Vagina (tissue), 2 donors: ENCODE measurements at regions of chr12 and their contacts with region 1.

Region 1: GRCh38 chr12:124321040-124321481 is 26.2 kb downstream of the RFLNA start:
- DNase-seq: no peak
- H3K4me3 ChIP-seq: no peak overlapping the region
- H3K27ac ChIP-seq: no peak overlapping the region
- H3K4me1 ChIP-seq: no peaks in the 10 kb centered on the region
- H3K27me3 ChIP-seq: no peaks in the 10 kb centered on the region
- CTCF ChIP-seq: peak; percentile 72 to 89 (median 73)
- POLR2A ChIP-seq: no peak

Region 2: DNA sequence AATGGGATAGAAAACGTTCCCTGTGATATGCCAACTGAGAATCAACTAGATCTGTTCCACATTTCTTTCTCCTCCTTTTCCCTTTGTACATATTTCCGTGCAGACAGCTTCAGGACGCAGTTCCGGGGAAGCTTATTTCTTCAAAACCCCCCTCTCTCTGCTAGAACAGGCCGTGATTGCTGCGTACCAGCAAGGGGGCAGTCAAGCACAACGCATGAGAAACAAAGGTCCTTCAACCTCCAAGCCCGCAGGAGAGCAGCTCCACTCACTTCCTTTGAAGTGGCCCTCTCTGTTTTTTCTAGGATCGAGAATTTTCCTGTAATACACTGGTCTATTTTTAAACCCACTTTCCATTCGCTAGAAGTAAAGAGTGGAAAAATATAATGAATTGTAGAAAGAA is 267.2 kb before region 1 on chr12:
- intact Hi-C with region 1: loop called (anchors 5 kb)
- DNase-seq: no peak
- H3K4me3 ChIP-seq: no peak overlapping the region
- H3K27ac ChIP-seq: no peak overlapping the region
- H3K4me1 ChIP-seq: no peaks in the 10 kb centered on the region
- H3K27me3 ChIP-seq: no peaks in the 10 kb centered on the region
- CTCF ChIP-seq: peak; percentile 34 to 48 (median 41)
- POLR2A ChIP-seq: no peak

Region 3: GRCh38 chr12:124174451-124175348 is 146.4 kb before region 1 on chr12:
- intact Hi-C with region 1: no loop called
- DNase-seq: no peak
- H3K4me3 ChIP-seq: no peak overlapping the region
- H3K27ac ChIP-seq: no peak overlapping the region
- H3K4me1 ChIP-seq: no peaks in the 10 kb centered on the region
- H3K27me3 ChIP-seq: no peaks in the 10 kb centered on the region
- CTCF ChIP-seq: no peak
- POLR2A ChIP-seq: no peak